Panc1 (cell line): ENCODE measurements at regions of chr11 and their contacts with region 1.

Region 1: DNA sequence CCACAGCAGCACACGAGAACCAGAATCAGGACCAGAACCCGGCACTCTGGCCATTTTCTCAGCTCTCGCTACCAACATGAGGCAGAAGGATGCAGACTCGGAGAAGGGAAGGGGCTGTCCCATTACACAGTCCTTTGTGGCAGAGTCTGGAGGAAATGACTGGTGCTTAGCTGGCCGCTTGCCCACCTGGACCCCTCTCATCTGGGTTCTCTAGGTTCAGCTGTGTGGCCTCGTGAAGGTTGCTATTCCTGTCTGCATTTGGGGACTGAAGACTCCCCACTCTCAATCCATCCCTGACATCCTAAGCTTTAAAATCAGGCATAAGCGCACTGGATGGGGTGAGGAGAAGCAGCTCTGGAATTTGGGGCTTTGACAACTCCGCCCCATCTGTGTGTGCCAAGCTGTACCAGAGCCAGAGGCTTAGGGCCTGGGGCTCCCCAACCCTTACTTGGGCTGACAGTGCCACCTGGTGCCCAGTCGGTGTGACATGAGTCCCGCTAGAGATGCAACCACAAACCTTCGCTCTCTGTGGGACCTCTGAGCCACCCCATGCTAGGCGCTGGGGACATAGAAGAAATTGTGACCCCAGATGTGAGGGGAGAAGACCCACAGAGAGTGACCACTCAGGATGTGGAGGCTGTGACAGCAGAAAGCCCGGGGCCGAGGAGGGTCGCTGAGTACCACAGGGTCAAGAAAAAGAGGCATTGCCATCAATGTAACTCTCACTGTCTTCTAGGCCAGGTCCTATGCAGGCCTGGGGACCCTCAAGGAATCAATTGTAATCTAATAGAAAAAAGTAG is 35.9 kb upstream of the FCHSD2 start:
- DNase-seq: peak; percentile 59
- ATAC-seq: peak; percentile 94
- H3K4me3 ChIP-seq: no peak overlapping the region
- H3K27ac ChIP-seq: no peak overlapping the region
- H3K4me1 ChIP-seq: no peaks in the 10 kb centered on the region
- H3K27me3 ChIP-seq: 0 out of 2 replicates have a peak, but pooled peaks cover 3% of the 10 kb centered on the region
- CTCF ChIP-seq: peak; percentile 88

Region 2: GRCh38 chr11:72724851-72725730 is 452.9 kb before region 1 on chr11:
- CTCF ChIA-PET with region 1: no interaction called
- POLR2A ChIA-PET with region 1: no interaction called
- in situ Hi-C with region 1: no loop called
- intact Hi-C with region 1: loop called (anchors 5 kb)
- DNase-seq: peak; percentile 60
- ATAC-seq: peak; percentile 57
- H3K4me3 ChIP-seq: no peak overlapping the region
- H3K27ac ChIP-seq: no peak overlapping the region
- H3K4me1 ChIP-seq: peaks cover 19% of the 10 kb centered on the region
- H3K27me3 ChIP-seq: no peaks in the 10 kb centered on the region
- CTCF ChIP-seq: peak; percentile 96

Region 3: GRCh38 chr11:72831513-72832300 is 346.3 kb before region 1 on chr11:
- CTCF ChIA-PET with region 1: interaction called, 15 read pairs
- POLR2A ChIA-PET with region 1: no interaction called
- in situ Hi-C with region 1: no loop called
- intact Hi-C with region 1: loop called (anchors 1 kb)
- DNase-seq: peak; percentile 42
- ATAC-seq: peak; percentile 96
- H3K4me3 ChIP-seq: no peak overlapping the region
- H3K27ac ChIP-seq: 0 out of 2 replicates have a peak overlapping the region, but pooled peaks have one; percentile 13
- H3K4me1 ChIP-seq: 0 out of 2 replicates have a peak, but pooled peaks cover 4% of the 10 kb centered on the region
- H3K27me3 ChIP-seq: no peaks in the 10 kb centered on the region
- CTCF ChIP-seq: peak; percentile 98

Region 4: GRCh38 chr11:72924568-72925190 is 253.3 kb before region 1 on chr11:
- CTCF ChIA-PET with region 1: interaction called, 4 read pairs
- POLR2A ChIA-PET with region 1: no interaction called
- in situ Hi-C with region 1: no loop called
- intact Hi-C with region 1: loop called (anchors 2 kb)
- DNase-seq: peak; percentile 15
- ATAC-seq: no peak
- H3K4me3 ChIP-seq: no peak overlapping the region
- H3K27ac ChIP-seq: no peak overlapping the region
- H3K4me1 ChIP-seq: no peaks in the 10 kb centered on the region
- H3K27me3 ChIP-seq: no peaks in the 10 kb centered on the region
- CTCF ChIP-seq: peak; percentile 75

Region 5: DNA sequence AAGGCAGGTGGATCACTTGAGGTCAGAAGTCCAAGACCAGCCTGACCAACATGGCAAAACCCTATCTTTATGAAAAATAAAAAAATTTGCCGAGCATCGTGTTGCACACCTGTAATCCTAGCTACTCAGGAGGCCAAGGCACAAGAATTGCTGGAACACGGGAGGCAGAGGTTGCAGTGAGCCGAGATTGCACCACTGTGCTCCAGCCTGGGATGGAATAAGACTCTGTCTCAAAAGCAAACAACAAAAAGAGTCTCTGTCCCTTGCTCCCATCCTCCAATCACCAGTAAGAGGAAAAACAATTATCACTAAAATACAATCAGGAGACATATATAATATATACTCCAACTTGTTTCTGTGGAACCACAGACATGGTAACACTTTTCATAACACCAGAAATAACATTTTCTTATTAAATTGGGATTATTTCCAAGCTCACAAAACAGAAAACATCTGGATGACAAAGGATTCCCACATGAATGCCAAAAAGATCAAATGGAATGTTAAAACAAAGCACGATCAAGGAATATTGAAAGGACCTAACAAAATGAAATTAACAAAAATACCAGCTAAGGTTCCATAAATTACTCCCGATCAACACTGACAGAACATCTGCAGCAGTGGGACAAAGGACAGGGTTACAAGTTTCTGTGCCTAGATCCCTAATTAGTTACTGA is 51.0 kb before region 1 on chr11:
- CTCF ChIA-PET with region 1: no interaction called
- POLR2A ChIA-PET with region 1: no interaction called
- in situ Hi-C with region 1: no loop called
- intact Hi-C with region 1: no loop called
- DNase-seq: no peak
- ATAC-seq: no peak
- H3K4me3 ChIP-seq: no peak overlapping the region
- H3K27ac ChIP-seq: no peak overlapping the region
- H3K4me1 ChIP-seq: no peaks in the 10 kb centered on the region
- H3K27me3 ChIP-seq: no peaks in the 10 kb centered on the region
- CTCF ChIP-seq: no peak

Region 6: GRCh38 chr11:73141031-73141847 is 36.7 kb before region 1 on chr11:
- CTCF ChIA-PET with region 1: interaction called, 10 read pairs
- POLR2A ChIA-PET with region 1: no interaction called
- in situ Hi-C with region 1: no loop called
- intact Hi-C with region 1: no loop called
- DNase-seq: no peak
- ATAC-seq: peak; percentile 18
- H3K4me3 ChIP-seq: peak overlapping the region; percentile 72 to 94
- H3K27ac ChIP-seq: peak overlapping the region; percentile 89
- H3K4me1 ChIP-seq: peaks cover 19% of the 10 kb centered on the region
- H3K27me3 ChIP-seq: no peaks in the 10 kb centered on the region
- CTCF ChIP-seq: no peak